ENCODE measurements at regions of chr16 and their contacts with region 1.

Region 1: DNA sequence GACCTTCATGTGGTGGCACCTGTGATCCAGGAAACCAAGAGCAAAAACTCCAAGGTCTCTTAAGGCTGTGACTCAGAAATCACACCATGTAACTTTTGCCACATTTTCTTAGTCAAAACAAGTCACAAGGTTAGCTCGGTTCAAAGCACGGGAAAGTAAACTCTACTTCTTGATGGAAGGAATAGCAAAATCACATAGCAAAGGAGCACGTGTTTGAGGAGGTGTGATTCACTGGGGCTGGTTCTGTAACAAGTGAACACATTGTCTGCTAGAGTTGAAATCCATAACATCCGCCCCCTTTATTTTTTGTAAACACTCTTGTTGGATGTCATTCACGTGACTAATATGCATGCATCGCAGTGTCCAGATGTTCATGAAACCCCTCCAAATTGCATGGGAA is 415.0 kb upstream of the MAF start:
- DNase-seq: no peak

Region 2: DNA sequence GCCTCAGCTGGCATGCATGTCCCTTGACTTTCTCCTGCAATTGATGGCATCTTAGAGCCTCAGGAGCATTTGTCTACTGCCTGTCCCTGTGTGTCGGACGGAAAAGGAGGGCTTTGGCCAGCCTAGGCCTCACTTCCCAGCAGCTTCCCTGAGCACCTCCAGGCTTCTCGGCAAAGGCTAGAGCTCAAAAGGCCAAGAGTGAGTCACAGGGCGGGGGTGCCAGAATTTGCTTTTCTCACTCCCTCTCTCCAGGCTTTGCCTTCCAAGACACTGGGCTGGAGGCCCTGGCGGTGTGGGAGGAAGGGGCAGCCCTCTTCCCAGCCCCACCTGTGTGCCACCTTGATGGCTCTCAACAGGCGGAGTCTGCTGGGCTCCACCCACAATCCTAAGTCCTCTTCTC is 307.7 kb before region 1 on chr16:
- intact Hi-C with region 1: no loop called
- DNase-seq: peak; percentile 95

Region 3: GRCh38 chr16:80309178-80309577 is 293.6 kb after region 1 on chr16:
- intact Hi-C with region 1: loop called in 1 of 2 experiments (anchors 5 kb)
- DNase-seq: no peak